ENCODE measurements at regions of chr1 and their contacts with region 1.

Region 1: DNA sequence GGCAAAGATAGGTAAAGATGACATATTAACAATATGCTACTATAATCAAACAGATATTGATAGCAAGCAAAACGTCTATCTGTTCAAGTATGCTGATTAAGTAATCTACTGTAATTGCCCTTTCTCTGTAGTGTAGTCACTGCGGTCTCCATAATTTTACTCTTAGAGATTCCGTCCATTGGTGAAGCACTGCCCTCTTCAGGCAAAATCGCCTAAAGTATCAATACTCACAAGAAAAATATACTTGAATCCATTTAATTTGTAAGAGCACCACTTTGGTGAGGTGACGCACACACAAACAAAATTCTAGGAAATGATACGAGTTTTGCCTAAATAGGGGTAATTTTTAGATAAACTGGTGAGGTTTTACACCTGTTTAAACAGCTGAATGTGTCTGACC is 434.6 kb upstream of the CHRM3 start:
- DNase-seq: peak in 1 of 10 donors; percentile 12
- H3K4me3 ChIP-seq: no peak overlapping the region
- H3K27ac ChIP-seq: no peak overlapping the region
- H3K27me3 ChIP-seq: no peaks in the 10 kb centered on the region
- CTCF ChIP-seq: peak in 51 of 56 donors; percentile 19 to 71 (median 45)

Region 2: GRCh38 chr1:237851210-237851845 is 1100.5 kb before region 1 on chr1:
- intact Hi-C with region 1: loop called in 1 of 2 experiments (anchors 10 kb)
- DNase-seq: peak; percentile 25 to 84 (median 72)
- H3K4me3 ChIP-seq: no peak overlapping the region
- H3K27ac ChIP-seq: no peak overlapping the region
- H3K27me3 ChIP-seq: peaks cover 0 to 2% (median 0%) of the 10 kb centered on the region in 45 donors
- CTCF ChIP-seq: peak; percentile 48 to 78 (median 67)

Region 3: GRCh38 chr1:238419209-238419608 is 532.6 kb before region 1 on chr1:
- intact Hi-C with region 1: no loop called
- DNase-seq: no peak
- H3K4me3 ChIP-seq: no peak overlapping the region
- H3K27ac ChIP-seq: no peak overlapping the region
- H3K27me3 ChIP-seq: no peaks in the 10 kb centered on the region
- CTCF ChIP-seq: peak in 37 of 56 donors; percentile 11 to 70 (median 36)

Region 4: GRCh38 chr1:239140968-239141367 is 189.2 kb after region 1 on chr1:
- intact Hi-C with region 1: no loop called
- DNase-seq: no peak
- H3K4me3 ChIP-seq: no peak overlapping the region
- H3K27ac ChIP-seq: no peak overlapping the region
- H3K27me3 ChIP-seq: no peaks in the 10 kb centered on the region
- CTCF ChIP-seq: no peak

Region 5: DNA sequence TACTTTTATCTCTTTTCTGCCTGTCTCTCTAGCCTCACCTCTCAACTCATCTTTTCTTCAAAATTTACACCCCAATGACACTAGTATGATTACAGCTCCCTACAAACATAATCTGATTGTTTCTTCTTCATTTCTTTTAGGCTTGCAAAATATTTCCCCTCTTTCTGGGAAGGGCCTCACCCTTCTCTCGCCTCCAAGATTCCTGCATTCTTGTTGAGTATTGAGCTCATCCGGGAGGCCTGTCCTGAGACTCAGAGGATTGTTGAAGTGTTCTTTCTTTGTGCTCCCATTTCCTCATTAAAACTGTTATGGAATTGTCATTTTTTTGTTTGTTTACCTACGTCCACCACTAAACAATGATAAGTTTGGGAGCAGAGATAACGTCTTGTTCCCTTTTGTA is 335.5 kb after region 1 on chr1:
- intact Hi-C with region 1: no loop called
- DNase-seq: no peak
- H3K4me3 ChIP-seq: no peak overlapping the region
- H3K27ac ChIP-seq: no peak overlapping the region
- H3K27me3 ChIP-seq: peaks cover 0 to 4% (median 0%) of the 10 kb centered on the region in 45 donors
- CTCF ChIP-seq: no peak